WTC11 (cell line): ENCODE measurements at regions of chr4 and their contacts with region 1.

Region 1: GRCh38 chr4:147019061-147019460 is 73.4 kb upstream of the TTC29 start:
- DNase-seq: peak; percentile 74
- ATAC-seq: peak; percentile 85
- H3K4me3 Mint-ChIP-seq: no peak overlapping the region
- H3K27ac Mint-ChIP-seq: no peak overlapping the region
- H3K4me1 Mint-ChIP-seq: peaks cover 12% of the 10 kb centered on the region
- H3K27me3 Mint-ChIP-seq: no peaks in the 10 kb centered on the region
- CTCF ChIP-seq: peak; percentile 48

Region 2: GRCh38 chr4:147034372-147034771 is 15.3 kb after region 1 on chr4:
- CTCF ChIA-PET with region 1: interaction called, 11 read pairs
- POLR2A ChIA-PET with region 1: no interaction called
- DNase-seq: no peak
- ATAC-seq: no peak
- H3K4me3 Mint-ChIP-seq: no peak overlapping the region
- H3K27ac Mint-ChIP-seq: no peak overlapping the region
- H3K4me1 Mint-ChIP-seq: peaks cover 13% of the 10 kb centered on the region
- H3K27me3 Mint-ChIP-seq: no peaks in the 10 kb centered on the region
- CTCF ChIP-seq: no peak

Region 3: DNA sequence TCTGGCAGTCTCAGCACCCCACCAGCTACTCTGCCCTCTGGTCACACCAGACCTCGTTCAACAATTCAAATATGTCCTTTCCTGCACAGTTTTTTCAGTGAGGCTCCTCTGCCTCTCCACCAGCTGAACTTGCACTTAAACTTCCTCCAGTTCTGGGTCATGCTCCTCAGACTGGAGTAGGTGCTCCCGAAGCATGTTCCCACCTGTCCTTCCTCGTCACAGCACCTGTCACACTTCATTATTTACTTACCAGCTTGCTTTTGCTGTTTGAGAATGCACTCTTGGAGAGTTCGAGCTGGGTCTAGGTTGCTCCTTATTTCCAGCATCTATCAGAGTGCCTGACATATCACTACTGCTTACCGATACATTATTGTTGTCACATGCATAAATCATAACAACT is 71.4 kb after region 1 on chr4:
- CTCF ChIA-PET with region 1: interaction called, 20 read pairs
- POLR2A ChIA-PET with region 1: no interaction called
- DNase-seq: no peak
- ATAC-seq: no peak
- H3K4me3 Mint-ChIP-seq: no peak overlapping the region
- H3K27ac Mint-ChIP-seq: no peak overlapping the region
- H3K4me1 Mint-ChIP-seq: peaks cover 14% of the 10 kb centered on the region
- H3K27me3 Mint-ChIP-seq: no peaks in the 10 kb centered on the region; the same call in 1 of the 2 replicates
- CTCF ChIP-seq: no peak

Region 4: DNA sequence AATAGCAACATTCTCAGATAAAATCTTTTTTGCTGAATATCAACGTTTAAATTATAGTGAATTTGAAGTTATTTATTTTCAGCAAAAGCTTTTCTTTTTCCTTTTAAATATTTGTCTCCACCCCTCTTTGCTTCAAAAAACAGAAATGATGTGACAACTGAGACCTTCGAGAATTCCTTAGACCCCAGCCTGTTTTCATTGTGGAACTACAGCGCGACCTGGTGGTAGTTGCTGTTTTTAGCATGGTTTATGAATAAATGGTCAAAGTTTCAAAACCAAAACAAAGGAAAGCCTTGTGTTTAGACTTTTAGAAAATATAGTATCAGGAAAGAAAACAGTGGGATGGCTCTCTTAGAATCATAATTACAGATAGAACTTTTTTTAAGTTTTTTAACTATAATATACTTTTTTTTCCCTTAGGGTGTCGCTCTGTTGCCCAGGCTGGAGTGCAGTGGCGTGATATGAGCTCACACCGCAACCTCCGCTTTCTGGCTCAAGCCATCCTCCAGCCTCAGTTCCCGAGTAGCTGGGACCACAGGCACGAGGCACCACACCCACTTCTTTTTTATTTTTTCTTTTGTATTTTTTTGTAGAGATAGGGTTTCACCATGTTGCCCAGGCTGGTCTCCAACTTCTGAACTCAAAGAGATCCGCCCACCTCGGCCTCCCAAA is 571.3 kb after region 1 on chr4:
- CTCF ChIA-PET with region 1: interaction called, 11 read pairs
- POLR2A ChIA-PET with region 1: no interaction called
- DNase-seq: peak; percentile 70
- ATAC-seq: peak; percentile 72
- H3K4me3 Mint-ChIP-seq: no peak overlapping the region
- H3K27ac Mint-ChIP-seq: no peak overlapping the region
- H3K4me1 Mint-ChIP-seq: peaks cover 23% of the 10 kb centered on the region
- H3K27me3 Mint-ChIP-seq: no peaks in the 10 kb centered on the region
- CTCF ChIP-seq: peak; percentile 51